Calu3 (cell line): ENCODE measurements at regions of chr7 and their contacts with region 1.

Region 1: DNA sequence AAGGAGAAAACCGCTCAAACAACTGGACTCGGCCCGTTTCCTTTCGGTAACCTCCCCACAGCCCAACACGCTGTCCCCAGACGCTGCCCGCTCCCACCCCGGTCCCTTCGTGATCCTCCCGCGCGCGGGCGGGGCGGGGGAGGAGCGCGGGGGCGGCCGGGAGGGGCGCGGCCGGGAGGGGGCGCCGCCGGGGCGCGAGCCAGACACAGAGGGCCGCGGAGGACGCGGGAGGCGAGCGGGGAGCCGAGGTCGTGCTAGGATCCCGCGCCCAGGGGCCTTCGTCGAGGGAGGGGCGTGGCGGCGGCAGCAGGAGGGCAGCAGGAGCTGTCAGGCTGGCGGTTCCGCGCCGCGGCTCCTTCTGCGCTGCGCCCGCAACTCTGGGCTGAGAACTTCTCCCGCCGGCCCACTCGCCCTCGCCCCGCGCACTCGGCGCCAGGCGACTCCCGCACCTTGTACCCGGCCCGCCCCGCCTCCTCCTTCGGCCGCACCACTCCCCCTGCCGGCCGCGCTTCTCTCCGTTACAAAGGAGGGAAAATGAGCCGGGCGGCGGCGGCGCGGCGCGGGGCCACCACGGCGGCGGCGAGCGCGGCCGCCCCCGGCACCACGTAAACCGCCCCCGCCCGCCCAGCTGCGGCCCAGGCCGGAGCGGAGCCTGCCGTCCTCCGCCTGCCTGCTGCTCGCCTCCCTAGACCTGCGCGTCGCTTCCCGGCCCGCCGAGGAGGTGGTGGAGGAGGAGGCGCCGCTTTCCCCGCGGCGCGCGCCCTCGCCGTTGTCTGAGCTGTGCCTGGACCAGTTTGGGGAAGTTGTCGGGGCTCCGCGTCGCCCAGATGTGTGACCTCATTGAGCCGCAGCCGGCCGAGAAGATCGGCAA is at the start of gene CDK14:
- DNase-seq: peak; percentile 78
- H3K4me3 Mint-ChIP-seq: peak within 1 kb of the TSS; percentile 93
- H3K27ac Mint-ChIP-seq: peak within 1 kb of the TSS; percentile 77
- H3K4me1 Mint-ChIP-seq: peaks cover 24% of the 10 kb centered on the region
- H3K27me3 Mint-ChIP-seq: no peaks in the 10 kb centered on the region
- CTCF ChIP-seq: peak; percentile 41
- total RNA-seq, gene CDK14: 29.4 and 31.4 TPM in 2 replicates

Region 2: DNA sequence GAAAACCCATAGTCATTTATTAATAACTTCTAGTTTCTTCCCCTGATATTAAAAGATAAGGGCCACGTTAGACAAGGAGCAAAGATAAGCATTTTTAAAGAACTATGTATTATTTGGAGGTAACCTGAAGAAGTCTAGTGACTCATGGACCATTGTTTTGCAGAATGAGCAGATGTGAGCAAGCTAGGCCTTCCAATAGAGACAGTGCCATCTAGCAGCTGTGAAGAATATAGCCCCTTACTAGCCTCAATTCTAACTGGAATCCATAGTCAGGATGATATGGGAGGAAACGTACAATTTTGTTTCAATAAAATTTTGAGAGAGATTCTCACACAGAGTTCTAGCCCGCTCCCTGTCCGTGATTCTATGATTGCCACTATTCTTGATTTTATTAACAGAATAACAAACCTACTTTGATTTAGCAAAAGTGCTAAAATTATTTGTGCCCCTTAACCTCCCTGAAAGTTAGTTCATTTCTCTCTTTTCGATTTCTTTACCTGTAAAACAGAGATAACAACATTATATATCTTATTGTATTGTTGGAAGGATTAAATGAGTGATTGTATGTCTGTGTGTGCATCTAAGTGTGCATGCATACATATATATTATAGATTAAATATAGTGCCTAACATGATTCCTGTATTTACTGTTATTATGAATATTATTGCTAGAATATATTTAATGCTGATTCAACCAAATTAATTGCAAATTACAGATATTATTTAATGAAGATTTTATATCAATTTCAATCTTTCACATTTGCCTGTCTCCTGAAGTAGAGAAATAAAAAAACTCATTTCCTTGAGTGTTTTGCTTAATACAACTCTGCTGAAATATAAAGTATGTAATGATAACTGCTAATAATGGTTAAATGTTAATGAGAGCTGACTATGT is 297.6 kb before region 1 on chr7:
- CTCF ChIA-PET with region 1: no interaction called
- intact Hi-C with region 1: no loop called
- DNase-seq: peak; percentile 10
- H3K4me3 Mint-ChIP-seq: no peak overlapping the region
- H3K27ac Mint-ChIP-seq: no peak overlapping the region
- H3K4me1 Mint-ChIP-seq: peaks cover 10% of the 10 kb centered on the region
- H3K27me3 Mint-ChIP-seq: no peaks in the 10 kb centered on the region
- CTCF ChIP-seq: peak; percentile 35

Region 3: GRCh38 chr7:90387470-90388240 is 208.4 kb before region 1 on chr7:
- CTCF ChIA-PET with region 1: no interaction called
- intact Hi-C with region 1: no loop called
- DNase-seq: no peak
- H3K4me3 Mint-ChIP-seq: no peak overlapping the region
- H3K27ac Mint-ChIP-seq: no peak overlapping the region
- H3K4me1 Mint-ChIP-seq: no peaks in the 10 kb centered on the region
- H3K27me3 Mint-ChIP-seq: no peaks in the 10 kb centered on the region
- CTCF ChIP-seq: no peak

Region 4: DNA sequence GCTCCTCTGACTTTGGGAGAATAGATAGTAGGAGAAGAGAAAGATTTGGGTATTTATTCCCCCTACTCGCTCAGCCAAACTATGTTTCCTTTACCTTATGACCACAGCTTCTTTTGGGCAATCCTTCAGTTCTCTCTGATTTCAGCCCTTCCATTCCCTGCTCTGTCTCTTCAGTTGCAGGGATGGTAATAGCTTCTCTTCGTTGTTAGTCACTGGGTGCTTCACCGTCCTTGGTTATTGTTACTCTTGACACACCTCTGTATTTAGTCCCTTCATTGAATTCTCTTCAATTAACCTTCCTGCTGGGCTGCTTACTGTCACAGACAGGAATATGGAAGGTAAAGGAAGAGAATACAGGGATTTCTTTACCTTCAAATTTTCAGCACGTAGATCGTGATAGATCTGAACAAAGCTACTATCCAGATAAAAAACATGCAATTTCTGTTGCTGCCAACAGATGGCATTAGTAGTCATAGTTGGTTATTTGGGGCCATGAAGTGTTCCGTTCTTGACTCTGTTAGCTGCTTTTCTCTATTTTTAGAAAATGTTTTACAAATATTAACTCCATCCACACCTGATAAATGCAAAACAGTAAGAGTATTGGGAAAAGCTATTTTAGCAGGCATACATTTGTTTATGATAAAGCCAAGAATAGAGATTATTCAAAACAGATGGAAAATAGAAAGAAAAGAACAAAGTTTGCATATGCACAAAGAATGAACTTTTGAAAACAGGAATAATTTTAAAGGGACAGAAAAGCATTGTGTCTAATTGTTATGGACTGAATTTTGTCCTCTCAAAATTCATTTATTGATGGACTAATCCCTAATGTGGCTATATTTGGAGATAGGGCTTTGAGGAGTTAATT is 140.6 kb before region 1 on chr7:
- CTCF ChIA-PET with region 1: interaction called, 6 read pairs
- intact Hi-C with region 1: loop called (anchors 5 kb)
- DNase-seq: peak; percentile 8
- H3K4me3 Mint-ChIP-seq: peak overlapping the region; percentile 58
- H3K27ac Mint-ChIP-seq: no peak overlapping the region
- H3K4me1 Mint-ChIP-seq: peaks cover 10% of the 10 kb centered on the region
- H3K27me3 Mint-ChIP-seq: no peaks in the 10 kb centered on the region
- CTCF ChIP-seq: peak; percentile 44

Region 5: DNA sequence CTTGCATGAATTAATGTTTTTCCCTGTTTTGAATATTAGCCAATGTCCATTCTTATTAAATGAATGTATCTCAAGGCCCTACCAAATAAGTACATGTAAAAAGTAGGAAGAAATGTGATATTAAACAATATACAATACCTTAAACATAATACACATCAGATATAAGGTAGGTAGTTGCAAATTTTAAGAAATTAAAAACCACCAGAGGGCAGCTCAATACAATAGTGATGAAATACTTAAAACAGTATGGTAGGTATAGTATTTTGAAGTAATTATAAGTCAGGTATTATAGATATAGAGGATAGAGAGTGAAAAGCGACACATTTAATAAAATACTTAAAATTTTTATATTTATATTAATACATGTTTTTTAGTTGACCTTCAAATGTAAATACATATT is 43.5 kb before region 1 on chr7:
- CTCF ChIA-PET with region 1: no interaction called
- intact Hi-C with region 1: loop called (anchors 2 kb)
- DNase-seq: no peak
- H3K4me3 Mint-ChIP-seq: no peak overlapping the region
- H3K27ac Mint-ChIP-seq: no peak overlapping the region
- H3K4me1 Mint-ChIP-seq: no peaks in the 10 kb centered on the region
- H3K27me3 Mint-ChIP-seq: no peaks in the 10 kb centered on the region
- CTCF ChIP-seq: no peak

Region 6: DNA sequence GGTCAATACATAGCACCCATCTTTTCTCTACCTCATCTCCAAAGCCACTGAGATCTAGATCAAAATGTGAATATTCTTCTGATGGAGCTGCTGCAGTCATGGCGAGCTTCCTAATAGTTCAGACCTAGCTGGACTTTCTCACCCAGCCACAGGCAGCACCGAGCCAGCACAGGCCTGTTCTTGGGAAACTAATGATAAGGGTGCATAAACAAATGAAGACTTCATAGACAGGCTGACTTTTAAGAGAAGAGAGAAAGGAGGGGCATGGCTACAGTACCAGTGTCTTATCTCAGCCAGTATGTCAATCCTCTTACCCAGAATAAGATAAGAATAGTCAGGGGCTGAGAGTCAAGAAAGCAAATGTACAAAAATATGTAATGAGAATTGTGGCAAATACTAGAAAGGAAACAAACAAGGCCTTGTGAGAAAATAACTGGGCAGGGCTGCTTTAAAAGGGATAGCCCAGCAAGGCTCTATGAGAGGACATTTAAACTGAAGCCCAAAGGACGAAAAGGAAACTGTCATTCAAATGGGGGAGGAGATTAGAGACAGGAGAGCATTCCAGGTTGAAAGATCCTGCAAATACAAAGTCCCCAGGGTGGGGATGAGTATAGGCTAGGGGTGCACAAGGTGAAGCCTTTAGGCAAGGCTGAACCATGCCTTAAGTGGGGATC is 21.8 kb before region 1 on chr7:
- CTCF ChIA-PET with region 1: no interaction called
- intact Hi-C with region 1: no loop called
- DNase-seq: no peak
- H3K4me3 Mint-ChIP-seq: no peak overlapping the region
- H3K27ac Mint-ChIP-seq: no peak overlapping the region
- H3K4me1 Mint-ChIP-seq: no peaks in the 10 kb centered on the region
- H3K27me3 Mint-ChIP-seq: no peaks in the 10 kb centered on the region
- CTCF ChIP-seq: no peak

Region 7: DNA sequence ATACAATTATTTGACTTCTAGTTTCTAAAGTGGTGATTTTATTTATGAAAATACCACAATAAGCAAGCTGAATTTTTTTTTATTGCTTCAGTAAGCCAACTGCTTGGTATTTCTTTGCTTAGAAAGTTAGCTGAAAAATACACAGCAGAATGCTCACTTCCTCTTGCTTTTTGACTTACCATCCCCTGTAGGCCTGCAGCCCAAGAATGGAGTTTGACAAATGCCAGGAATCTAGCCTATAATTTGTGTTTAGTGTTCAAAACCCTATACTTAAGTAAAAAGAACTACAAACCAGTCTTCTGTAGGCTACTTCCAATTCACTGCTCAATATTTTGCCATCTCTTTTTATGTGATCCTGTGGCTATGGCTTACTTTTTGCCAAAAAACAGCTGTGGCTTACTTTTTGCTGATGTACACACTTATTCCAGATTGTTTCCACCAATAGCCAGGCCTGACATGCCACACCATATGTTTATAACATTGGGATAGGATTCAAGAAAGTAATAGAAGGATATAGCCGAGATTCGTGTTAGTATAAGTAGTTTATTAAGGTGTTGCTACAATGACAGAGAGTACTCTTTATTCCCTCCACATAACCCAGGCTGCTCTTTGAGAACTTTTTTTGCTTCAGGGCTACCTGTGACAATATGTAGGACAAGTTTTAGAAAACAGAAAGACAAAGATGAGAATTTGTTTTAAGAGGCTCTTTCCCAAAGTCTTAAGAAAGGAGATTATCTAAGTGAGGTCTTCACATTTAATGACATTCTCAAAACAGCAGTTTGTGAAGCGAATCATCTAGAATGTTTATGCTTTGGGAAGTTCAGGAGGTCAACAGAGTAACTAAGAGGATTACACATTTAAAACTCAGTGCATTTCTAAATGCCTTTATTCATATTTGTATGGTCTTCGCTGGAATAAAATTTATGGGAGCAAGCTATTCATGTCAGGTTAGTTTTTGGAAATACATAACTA is 404.3 kb after region 1 on chr7:
- CTCF ChIA-PET with region 1: no interaction called
- intact Hi-C with region 1: no loop called
- DNase-seq: no peak
- H3K4me3 Mint-ChIP-seq: no peak overlapping the region
- H3K27ac Mint-ChIP-seq: no peak overlapping the region
- H3K4me1 Mint-ChIP-seq: no peaks in the 10 kb centered on the region
- H3K27me3 Mint-ChIP-seq: no peaks in the 10 kb centered on the region
- CTCF ChIP-seq: no peak